Ascending aorta (tissue), 2 donors: ENCODE measurements at regions of chr11 and their contacts with region 1.

Region 1: GRCh38 chr11:63838678-63839507 is at the start of gene MARK2:
- DNase-seq: peak; percentile 83 to 99
- H3K4me3 ChIP-seq: peak within 1 kb of the TSS; percentile 93 to 96
- H3K27ac ChIP-seq: peak within 1 kb of the TSS; percentile 81 to 83
- H3K4me1 ChIP-seq: peaks cover 7 to 38% of the 10 kb centered on the region in 2 donors
- H3K27me3 ChIP-seq: no peaks in the 10 kb centered on the region
- CTCF ChIP-seq: no peak
- total RNA-seq, gene MARK2: 45.7 TPM

Region 2: DNA sequence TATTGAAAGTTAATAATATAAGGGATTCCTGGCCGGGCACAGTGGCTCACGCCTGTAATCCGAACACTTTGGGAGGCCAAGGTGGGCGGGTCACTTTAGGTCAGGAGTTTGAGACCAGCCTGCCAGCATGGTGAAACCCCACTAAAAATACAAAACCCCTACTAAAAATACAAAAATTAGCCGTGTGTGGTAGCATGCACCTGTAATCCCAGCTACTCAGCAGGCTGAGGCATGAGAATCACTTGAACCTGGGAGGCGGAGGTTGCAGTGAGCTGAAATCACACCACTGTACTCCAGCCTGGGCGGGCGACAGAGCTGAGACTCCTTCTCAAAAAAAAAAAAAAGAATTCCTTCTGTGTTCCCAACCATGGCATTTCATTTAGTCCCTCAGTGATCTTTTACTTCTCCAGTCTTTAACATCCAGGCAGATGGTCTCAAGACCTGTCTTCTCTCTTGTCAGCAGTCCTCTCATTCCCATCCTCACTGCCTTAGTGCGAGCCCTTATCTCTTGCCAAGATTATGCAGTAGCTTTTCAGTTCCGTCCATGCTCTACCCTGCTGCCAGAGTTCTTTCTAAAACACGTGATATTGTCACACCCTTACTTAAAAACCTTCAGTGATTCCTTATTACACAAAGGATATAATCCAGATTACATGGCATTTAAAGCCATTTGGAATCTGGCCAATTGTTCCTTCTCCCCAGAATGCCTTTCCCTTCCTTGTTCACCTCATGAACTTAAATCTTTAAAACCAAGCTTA is 139.7 kb before region 1 on chr11:
- intact Hi-C with region 1: no loop called
- DNase-seq: no peak
- H3K4me3 ChIP-seq: no peak overlapping the region
- H3K27ac ChIP-seq: no peak overlapping the region
- H3K4me1 ChIP-seq: no peaks in the 10 kb centered on the region
- H3K27me3 ChIP-seq: no peaks in the 10 kb centered on the region
- CTCF ChIP-seq: no peak

Region 3: GRCh38 chr11:63813035-63813562 is 25.8 kb before region 1 on chr11 and contains the start of gene SPINDOC:
- intact Hi-C with region 1: loop called (anchors 1 kb)
- DNase-seq: peak; percentile 28 to 88
- H3K4me3 ChIP-seq: peak within 1 kb of the TSS; percentile 95
- H3K27ac ChIP-seq: peak within 1 kb of the TSS; percentile 71 to 80
- H3K4me1 ChIP-seq: peaks cover 3 to 15% of the 10 kb centered on the region in 2 donors
- H3K27me3 ChIP-seq: no peaks in the 10 kb centered on the region
- CTCF ChIP-seq: no peak
- total RNA-seq, gene SPINDOC: 5.0 TPM

Region 4: GRCh38 chr11:63888170-63889086 is 49.5 kb after region 1 on chr11:
- intact Hi-C with region 1: loop called (anchors 5 kb)
- DNase-seq: peak; percentile 25 to 83
- H3K4me3 ChIP-seq: peak overlapping the region; percentile 34 to 63
- H3K27ac ChIP-seq: peak overlapping the region; percentile 73 to 76
- H3K4me1 ChIP-seq: peaks cover 8 to 23% of the 10 kb centered on the region in 2 donors
- H3K27me3 ChIP-seq: no peaks in the 10 kb centered on the region
- CTCF ChIP-seq: no peak

Region 5: GRCh38 chr11:63938479-63939396 is 99.8 kb after region 1 on chr11 and contains the start of gene NAA40:
- intact Hi-C with region 1: loop called (anchors 2 kb)
- DNase-seq: peak; percentile 72 to 96
- H3K4me3 ChIP-seq: peak within 1 kb of the TSS; percentile 68 to 83
- H3K27ac ChIP-seq: peak within 1 kb of the TSS; percentile 24 to 49
- H3K4me1 ChIP-seq: peaks cover 4 to 7% of the 10 kb centered on the region in 2 donors
- H3K27me3 ChIP-seq: no peaks in the 10 kb centered on the region
- CTCF ChIP-seq: no peak
- total RNA-seq, gene NAA40: 3.1 TPM

Region 6: GRCh38 chr11:63961608-63962412 is 122.9 kb after region 1 on chr11:
- intact Hi-C with region 1: no loop called
- DNase-seq: no peak
- H3K4me3 ChIP-seq: no peak overlapping the region
- H3K27ac ChIP-seq: no peak overlapping the region
- H3K4me1 ChIP-seq: no peaks in the 10 kb centered on the region
- H3K27me3 ChIP-seq: no peaks in the 10 kb centered on the region
- CTCF ChIP-seq: no peak

Region 7: DNA sequence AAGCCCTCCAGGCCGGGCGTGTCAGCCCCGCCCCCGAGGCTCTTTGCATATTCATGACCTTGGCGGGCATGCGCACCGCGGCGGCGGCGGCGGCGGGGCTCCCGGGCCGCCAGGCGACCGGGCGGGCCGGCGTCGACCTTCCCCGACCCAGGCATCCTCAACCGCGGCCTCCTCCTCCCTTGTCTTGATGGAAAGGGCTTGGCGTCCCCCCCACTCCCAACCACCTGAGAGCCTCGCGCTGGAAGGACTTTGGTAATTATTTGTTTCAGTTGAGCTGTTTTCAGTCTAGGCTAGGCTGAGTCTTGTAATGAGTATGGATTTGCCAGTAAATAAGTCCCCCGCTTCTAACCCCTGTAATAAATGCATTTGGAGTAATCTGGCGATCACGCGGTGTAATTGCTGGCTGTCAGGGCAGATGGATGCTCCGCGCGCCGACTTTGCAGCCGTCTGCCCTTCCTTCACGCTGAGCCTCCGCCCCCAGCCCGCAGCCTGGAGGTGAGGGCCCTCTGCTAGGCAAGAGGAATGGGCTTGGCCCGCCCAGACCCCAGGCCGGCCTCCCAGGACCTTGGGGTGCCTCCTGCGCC is 222.1 kb after region 1 on chr11:
- intact Hi-C with region 1: no loop called
- DNase-seq: no peak
- H3K4me3 ChIP-seq: peak overlapping the region; percentile 27 to 60
- H3K27ac ChIP-seq: no peak overlapping the region
- H3K4me1 ChIP-seq: peaks cover 0 to 6% of the 10 kb centered on the region in 2 donors
- H3K27me3 ChIP-seq: no peaks in the 10 kb centered on the region
- CTCF ChIP-seq: no peak

Region 8: GRCh38 chr11:64152841-64153691 is 314.2 kb after region 1 on chr11:
- intact Hi-C with region 1: loop called (anchors 1 kb)
- DNase-seq: peak in 1 of 2 donors; percentile 75
- H3K4me3 ChIP-seq: no peak overlapping the region
- H3K27ac ChIP-seq: no peak overlapping the region
- H3K4me1 ChIP-seq: peaks cover 0 to 3% of the 10 kb centered on the region in 2 donors
- H3K27me3 ChIP-seq: no peaks in the 10 kb centered on the region
- CTCF ChIP-seq: peak; percentile 87 to 100 (median 100)